Vagina (tissue), 2 donors: ENCODE measurements at regions of chr4 and their contacts with region 1.

Region 1: DNA sequence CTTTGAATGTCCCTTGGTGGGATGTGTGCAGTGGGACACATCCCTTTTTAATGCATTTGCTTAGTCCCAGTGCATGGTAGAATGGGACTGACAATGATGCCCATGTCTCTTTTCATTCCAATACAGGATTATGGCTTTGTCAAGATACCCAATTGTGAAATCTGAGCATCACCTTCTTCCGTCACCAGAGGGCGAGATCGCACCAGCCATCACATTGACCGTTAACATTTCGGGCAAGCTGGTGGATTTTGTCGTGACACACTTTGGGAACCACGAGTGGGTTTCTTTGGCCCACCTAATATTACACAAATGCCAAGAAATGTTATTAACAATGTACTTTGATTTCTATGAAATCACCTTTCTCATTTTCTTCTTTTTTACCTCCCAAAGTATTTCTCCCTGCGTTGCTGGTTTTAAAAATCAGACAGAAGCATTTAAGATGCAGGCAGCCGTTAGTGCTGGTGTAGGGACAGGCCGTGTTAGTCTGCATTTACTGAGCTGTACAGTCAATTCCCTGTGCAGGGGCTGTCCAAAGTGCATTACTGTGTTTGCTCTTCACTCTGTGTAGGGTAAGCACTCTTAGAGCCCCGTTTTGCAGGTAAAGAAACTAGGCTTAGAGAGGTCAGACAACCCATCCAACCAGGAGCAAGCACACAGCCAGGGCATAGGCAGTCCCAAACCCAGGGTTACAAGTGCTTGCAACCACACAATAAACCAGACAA is 46.5 kb downstream of the CWH43 start:
- DNase-seq: no peak
- H3K4me3 ChIP-seq: no peak overlapping the region
- H3K27ac ChIP-seq: no peak overlapping the region
- H3K4me1 ChIP-seq: no peaks in the 10 kb centered on the region
- H3K27me3 ChIP-seq: no peaks in the 10 kb centered on the region
- CTCF ChIP-seq: no peak
- POLR2A ChIP-seq: no peak

Region 2: GRCh38 chr4:48668254-48669017 is 364.2 kb before region 1 on chr4:
- intact Hi-C with region 1: no loop called
- DNase-seq: no peak
- H3K4me3 ChIP-seq: no peak overlapping the region
- H3K27ac ChIP-seq: no peak overlapping the region
- H3K4me1 ChIP-seq: peaks cover 18% of the 10 kb centered on the region
- H3K27me3 ChIP-seq: no peaks in the 10 kb centered on the region
- CTCF ChIP-seq: no peak
- POLR2A ChIP-seq: no peak

Region 3: DNA sequence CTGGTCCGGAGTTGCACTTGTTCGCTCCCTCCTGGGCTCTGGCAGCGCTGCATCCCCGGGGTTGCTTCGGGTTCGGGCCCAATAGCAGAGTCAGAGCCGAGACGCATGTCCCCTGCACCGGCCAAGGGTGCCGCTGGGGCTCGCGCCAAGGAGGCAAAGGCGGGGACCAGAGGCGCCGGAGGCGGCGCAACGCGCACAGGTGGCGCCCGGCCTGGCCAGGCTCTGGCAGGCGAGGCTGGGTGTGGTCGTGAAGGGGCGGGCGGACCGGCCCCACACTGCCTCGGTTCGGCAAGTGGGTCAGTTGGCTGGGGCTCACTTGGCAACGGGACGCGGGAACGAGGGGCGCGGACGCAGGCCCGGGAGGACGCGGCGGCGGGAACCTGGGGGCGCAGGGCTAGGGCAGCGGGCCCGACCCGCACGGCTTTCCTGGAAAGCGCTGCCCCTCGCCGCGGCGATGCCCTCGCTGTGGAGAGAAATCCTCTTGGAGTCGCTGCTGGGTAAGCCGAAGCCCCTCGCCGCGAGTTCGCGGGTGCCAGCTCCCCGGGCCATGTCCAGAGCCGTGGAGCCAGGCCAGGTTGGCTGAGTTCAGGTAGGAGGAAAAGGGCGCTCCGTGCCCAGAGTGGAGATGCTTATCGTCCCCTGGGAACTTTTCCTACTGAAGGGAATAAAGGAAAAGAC is 46.5 kb before region 1 on chr4 and contains the start of gene CWH43:
- intact Hi-C with region 1: no loop called
- DNase-seq: no peak
- H3K4me3 ChIP-seq: peak within 1 kb of the TSS; percentile 24 to 38
- H3K27ac ChIP-seq: no peak within 1 kb of the TSS
- H3K4me1 ChIP-seq: peaks cover 10% of the 10 kb centered on the region
- H3K27me3 ChIP-seq: no peaks in the 10 kb centered on the region
- CTCF ChIP-seq: no peak
- POLR2A ChIP-seq: no peak
- total RNA-seq, gene CWH43: 11.3 TPM

Region 4: DNA sequence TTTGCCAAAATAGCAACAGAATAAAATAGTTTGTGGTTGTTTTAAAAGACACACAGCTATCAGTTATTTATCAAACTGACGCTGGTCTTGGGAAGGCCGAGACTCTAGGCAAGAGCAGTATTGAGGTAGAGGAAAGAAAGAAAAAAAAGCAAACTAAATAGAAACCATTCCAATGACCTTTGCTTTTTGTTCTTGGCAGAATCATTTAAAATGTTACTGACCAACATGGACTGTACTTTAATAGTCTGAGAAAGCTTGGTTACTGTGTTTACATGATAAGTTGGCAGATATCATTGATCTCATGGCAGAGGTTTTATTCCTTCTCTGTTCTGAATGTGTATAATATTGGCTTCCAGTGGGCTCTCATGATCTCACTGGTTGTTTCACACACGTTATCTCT is 34.6 kb before region 1 on chr4:
- intact Hi-C with region 1: loop called (anchors 2 kb)
- DNase-seq: no peak
- H3K4me3 ChIP-seq: no peak overlapping the region
- H3K27ac ChIP-seq: no peak overlapping the region
- H3K4me1 ChIP-seq: no peaks in the 10 kb centered on the region
- H3K27me3 ChIP-seq: no peaks in the 10 kb centered on the region
- CTCF ChIP-seq: no peak
- POLR2A ChIP-seq: no peak